Naive thymus-derived CD4-positive, alpha-beta T cell (primary cell): ENCODE measurements at regions of chr11 and their contacts with region 1.

Region 1: DNA sequence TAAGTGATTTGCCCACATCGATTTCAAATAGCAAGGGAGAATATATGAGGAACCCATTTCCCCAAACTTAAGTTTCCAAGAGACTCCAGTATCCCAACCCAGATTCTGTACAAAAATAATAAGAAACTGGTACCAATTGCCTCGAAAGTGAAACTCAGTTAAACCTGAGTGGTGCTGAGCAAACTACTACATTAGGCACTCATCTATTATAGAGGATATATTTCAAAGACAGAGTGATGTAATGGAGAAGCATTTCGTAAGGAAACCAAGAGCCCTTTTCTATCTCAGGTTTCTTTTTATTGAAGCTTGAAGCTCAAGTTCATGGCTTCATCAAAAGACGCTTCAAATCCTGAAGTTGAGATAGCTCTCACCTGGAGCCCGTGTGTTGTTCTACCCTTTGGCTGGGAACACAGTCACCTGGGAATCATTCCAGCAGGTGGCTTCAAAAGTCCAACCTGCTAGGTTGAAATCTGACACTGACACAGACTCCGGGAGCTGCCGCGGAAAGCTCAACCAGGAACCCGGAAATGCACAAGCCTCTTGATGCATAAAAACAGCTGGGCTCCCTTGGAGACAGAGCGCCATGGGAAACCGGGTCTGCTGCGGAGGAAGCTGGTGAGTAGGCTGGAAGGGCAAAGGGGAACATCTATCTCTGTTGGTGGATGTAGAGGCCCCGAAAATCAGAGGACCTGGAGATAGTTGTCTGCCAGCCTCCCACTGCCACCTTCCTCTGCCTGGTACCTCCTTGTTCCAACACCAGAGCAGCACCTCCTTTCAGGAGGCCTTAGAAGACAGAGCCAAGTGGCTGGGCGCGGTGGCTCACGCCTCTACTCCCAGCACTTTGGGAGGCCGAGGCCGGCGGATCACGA is at the start of gene C11orf52:
- DNase-seq: no peak
- ATAC-seq: no peak
- H3K4me3 ChIP-seq: no peak within 1 kb of the TSS
- H3K4me3 Mint-ChIP-seq: peak within 1 kb of the TSS in 1 of 10 donors; percentile 7
- H3K27ac ChIP-seq: no peak within 1 kb of the TSS
- H3K27ac Mint-ChIP-seq: no peak within 1 kb of the TSS
- H3K4me1 ChIP-seq: no peaks in the 10 kb centered on the region
- H3K4me1 Mint-ChIP-seq: peaks cover 0 to 2% (median 0%) of the 10 kb centered on the region in 7 donors
- H3K27me3 ChIP-seq: no peaks in the 10 kb centered on the region
- H3K27me3 Mint-ChIP-seq: peaks cover 25 to 47% (median 34%) of the 10 kb centered on the region in 5 donors
- total RNA-seq, gene C11orf52: not detected

Region 2: DNA sequence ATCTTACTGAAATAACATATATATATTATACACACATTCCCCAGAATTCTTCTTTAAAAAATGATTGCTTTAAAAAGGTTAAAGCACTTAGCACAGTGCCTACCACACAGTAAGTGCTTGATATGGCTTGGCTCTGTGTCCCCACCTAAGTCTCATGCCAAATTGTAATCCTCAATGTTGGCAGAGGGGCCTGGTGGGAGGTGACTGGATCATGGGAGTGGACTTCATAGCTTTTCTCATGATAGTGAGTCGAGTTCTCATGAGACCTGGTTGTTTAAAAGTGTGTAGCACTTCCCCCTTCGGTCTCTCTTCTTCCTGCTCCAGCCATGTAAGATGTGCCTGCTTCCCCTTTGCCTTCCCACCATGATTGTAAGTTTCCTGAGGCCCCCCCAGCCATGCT is 13.2 kb before region 1 on chr11:
- CTCF ChIA-PET with region 1: no interaction called
- POLR2A ChIA-PET with region 1: no interaction called
- intact Hi-C with region 1: loop called in 1 of 2 experiments (anchors 2 kb)
- DNase-seq: no peak
- ATAC-seq: no peak
- H3K4me3 ChIP-seq: no peak overlapping the region
- H3K4me3 Mint-ChIP-seq: no peak overlapping the region
- H3K27ac ChIP-seq: no peak overlapping the region
- H3K27ac Mint-ChIP-seq: no peak overlapping the region
- H3K4me1 ChIP-seq: no peaks in the 10 kb centered on the region
- H3K4me1 Mint-ChIP-seq: no peaks in the 10 kb centered on the region
- H3K27me3 ChIP-seq: no peaks in the 10 kb centered on the region
- H3K27me3 Mint-ChIP-seq: peaks cover 0 to 37% (median 7%) of the 10 kb centered on the region in 5 donors

Region 3: GRCh38 chr11:111960916-111961315 is 42.3 kb after region 1 on chr11:
- CTCF ChIA-PET with region 1: no interaction called
- POLR2A ChIA-PET with region 1: no interaction called
- intact Hi-C with region 1: no loop called
- DNase-seq: no peak
- ATAC-seq: no peak
- H3K4me3 ChIP-seq: no peak overlapping the region
- H3K4me3 Mint-ChIP-seq: no peak overlapping the region
- H3K27ac ChIP-seq: no peak overlapping the region
- H3K27ac Mint-ChIP-seq: no peak overlapping the region
- H3K4me1 ChIP-seq: no peaks in the 10 kb centered on the region
- H3K4me1 Mint-ChIP-seq: no peaks in the 10 kb centered on the region
- H3K27me3 ChIP-seq: no peaks in the 10 kb centered on the region
- H3K27me3 Mint-ChIP-seq: peaks cover 0 to 4% (median 0%) of the 10 kb centered on the region in 5 donors